Cardiac septum (tissue), 1 donor: ENCODE measurements at regions of chr3 and their contacts with region 1.

Region 1: GRCh38 chr3:50128001-50128400 is 27.1 kb upstream of the SEMA3F start:
- DNase-seq: no peak

Region 2: DNA sequence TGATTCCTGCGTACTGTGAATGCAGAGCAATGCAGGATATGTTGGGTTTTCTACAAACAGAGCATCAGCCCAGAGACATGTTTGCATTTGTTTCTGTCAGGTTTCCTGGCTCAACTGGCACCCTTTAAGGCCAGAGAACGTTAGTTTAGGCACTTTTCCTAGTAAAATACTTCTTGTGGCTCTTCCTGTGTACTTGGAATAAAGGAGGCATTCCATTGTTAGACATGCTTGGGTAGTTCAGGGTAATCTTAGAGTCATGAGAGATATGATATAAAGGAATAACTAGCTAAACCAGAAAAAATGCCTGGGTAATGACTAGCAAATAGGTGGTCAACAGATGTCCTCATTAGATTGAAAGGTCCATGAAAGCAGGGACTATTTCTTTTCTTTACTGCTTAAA is 99.7 kb before region 1 on chr3:
- intact Hi-C with region 1: no loop called
- DNase-seq: no peak

Region 3: DNA sequence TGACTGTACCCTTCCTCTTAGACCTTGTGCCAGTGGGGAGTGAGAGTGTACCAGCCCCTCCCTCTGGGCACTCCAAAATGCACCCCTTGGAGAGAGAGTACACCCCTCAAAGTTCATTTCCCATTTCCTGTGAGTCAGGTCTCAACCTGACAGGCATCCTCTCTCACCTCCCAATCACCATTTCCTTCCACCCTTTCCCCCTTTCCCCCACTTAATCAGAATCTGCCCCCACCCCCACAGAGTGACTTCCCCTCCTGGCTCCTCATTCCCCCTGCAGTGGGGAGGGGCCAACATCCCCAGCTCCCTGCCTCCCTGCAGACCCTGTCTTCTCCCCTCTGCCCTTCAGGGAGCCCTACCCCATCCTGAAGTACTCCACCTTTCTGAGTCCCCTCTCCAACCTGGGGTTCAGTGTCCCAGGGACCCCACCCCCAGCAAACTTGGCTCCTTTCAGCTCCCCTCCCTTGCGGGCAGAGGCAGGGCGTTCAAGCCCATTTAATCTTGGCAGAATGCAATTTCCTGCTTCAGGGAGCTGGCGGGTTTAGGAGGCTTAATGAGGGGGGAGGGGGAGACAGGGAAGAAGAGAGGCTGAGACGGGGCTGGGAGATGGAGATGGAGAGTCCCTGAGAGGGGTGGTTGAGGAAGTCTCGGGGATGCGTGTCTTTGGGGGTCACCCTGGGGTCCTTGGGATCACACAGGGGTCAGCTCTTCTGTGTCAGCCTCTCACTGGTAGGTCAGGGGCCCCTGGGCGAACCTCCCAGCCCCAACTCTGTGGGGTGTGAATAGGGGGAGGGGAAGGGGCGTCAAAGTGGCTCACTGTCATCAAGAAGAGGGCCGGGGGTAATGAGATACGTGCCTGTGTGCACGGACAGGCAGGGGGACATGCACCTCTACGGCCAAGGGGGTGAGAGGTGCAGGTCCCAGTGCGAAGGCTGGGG is 10.5 kb after region 1 on chr3:
- intact Hi-C with region 1: loop called (anchors 1 kb)
- DNase-seq: no peak